ENCODE measurements at regions of chr1 and their contacts with region 1.

Region 1: DNA sequence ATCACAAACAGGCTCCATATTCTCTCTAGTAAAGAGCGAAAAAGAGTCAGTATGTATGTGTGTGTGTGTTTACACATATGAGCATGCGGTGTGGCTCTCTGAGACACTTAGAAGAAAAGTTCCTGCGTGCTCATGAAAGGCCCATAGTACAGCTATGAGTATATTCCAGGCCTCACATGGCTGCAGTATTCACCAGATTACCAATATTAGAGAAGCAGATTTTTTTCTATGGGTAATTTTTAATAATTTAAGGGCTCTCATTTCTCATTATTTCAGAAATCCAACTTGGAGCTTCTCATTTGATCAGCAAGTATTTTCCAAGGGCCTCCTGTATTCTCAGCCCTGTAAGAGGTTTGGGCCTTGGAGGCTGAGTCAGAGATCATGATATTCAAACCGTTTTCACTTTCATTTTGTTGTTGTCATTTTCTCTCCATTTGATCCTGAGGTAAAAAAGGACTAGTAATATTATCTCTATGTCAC is 232.9 kb upstream of the SGIP1 start:
- DNase-seq: peak; percentile 21
- H3K4me3 Mint-ChIP-seq: peak overlapping the region; percentile 68
- H3K27ac Mint-ChIP-seq: peak overlapping the region; percentile 82
- H3K4me1 Mint-ChIP-seq: peaks cover 40% of the 10 kb centered on the region
- H3K27me3 Mint-ChIP-seq: no peaks in the 10 kb centered on the region

Region 2: DNA sequence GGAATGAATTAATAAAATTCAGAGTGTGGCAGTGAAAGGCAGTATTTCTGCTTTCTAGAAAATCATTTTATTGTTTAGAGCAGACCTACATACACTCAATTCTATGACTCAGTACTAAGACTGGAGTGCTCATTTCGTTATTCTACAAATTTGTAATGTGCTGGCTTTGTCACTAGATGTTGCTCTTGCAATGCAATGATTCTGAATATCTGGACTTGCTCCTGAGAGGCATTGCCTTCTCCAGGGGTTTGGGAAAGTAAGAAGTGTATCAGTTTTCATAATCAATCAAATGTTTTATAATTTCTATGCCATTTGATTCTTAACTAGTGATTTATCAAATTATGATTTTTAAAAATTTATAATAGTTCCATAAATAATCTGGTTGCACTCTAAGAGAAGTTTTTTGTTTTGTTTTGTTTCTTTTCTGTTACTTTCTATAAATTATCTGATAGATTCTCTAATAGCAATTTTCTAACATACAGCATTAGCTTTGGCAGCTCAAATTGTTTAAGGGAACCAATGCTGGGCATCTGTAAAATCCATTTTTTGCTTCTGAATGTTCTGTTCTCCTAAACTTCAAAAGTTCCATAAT is 47.6 kb before region 1 on chr1:
- intact Hi-C with region 1: loop called (anchors 2 kb)
- DNase-seq: no peak
- H3K4me3 Mint-ChIP-seq: no peak overlapping the region
- H3K27ac Mint-ChIP-seq: no peak overlapping the region
- H3K4me1 Mint-ChIP-seq: peaks cover 29% of the 10 kb centered on the region
- H3K27me3 Mint-ChIP-seq: no peaks in the 10 kb centered on the region

Region 3: DNA sequence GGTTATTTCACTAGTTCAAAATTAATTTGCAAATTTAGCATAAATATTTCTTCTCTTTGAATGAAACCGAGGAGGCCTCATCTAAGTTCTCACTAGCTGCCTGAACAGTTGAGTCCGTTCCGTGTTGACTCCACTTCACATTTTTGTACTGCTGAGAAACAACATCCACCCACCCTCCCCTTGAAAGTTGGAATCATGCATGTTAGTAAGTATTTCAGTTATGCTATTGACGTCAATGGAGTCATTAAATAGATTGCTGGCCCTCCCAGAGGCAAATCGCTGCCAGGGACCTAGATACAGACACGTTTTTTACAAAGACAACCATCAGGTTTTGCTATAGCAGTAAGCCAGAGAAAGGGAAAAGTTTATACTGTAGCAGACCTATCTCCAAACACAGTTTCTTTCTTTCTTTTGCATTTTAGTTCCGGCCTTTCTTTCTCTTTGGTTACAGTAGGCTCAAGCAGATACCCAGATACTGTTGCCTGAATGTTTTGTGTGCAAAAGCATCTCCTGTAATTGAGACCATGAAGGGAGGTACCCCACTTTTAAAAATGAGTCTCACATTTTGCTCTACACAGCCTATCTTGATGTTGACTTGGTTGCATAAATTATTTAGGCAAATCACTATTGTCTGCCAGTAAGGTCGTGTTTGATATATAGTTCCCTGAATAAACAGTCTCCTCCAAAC is 29.7 kb before region 1 on chr1:
- intact Hi-C with region 1: loop called (anchors 1 kb)
- DNase-seq: no peak
- H3K4me3 Mint-ChIP-seq: no peak overlapping the region
- H3K27ac Mint-ChIP-seq: peak overlapping the region; percentile 44
- H3K4me1 Mint-ChIP-seq: peaks cover 62% of the 10 kb centered on the region
- H3K27me3 Mint-ChIP-seq: peaks cover 21% of the 10 kb centered on the region

Measured in activated T-helper 2 cell treated with anti-CD3 and anti-CD28 coated beads, Interferon-gamma antibody, Interleukin-2, Interleukin-4, amounts not matched to agents 10 μg/mL and 5 μg/mL and 100 μg/mL, durations not matched to agents 14 hours and 24 hours and 36 hours (primary cell).